ENCODE measurements at regions of chr5 and their contacts with region 1.

Region 1: DNA sequence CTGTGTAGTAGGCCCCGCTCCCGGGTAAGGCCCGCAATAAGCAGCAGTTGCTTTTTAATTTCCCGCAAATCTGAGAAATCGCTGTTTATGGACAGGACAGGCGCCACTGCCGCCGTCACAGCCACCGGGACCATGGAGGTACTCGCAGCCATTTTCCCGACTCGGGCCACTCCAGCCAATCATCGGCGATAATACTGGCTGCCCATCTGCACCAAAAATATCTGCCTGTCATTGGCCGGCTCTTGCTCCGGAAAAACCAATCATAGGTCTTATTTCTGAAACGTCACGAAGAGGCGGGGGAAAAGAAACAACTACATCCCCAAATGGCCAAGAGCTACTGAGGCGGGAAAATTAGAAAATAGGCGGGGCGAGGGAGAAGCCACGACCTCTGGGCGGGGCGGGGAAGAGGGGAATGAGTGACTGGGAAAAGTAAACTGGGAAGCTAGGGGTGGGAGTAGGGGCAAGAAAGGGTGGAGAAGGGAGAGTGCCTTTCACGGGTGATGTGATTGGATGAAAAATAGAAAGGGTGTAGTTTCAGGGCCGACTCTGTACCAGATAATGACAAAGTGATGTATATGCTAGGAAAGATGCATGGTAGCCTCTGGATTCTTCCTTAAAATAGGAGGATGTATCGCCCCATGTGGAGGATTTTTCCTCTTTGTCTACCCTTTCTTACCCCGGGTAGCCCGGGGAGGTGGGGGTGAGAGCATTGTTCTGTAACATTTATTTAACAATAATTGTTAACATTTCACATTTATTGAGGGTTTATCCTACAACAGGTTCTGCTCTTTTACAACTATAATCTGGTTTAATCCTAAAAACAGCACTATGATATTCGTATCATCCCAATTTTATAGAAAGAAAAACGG is at the start of gene CDC23:
- DNase-seq: peak; percentile 78 to 98 (median 83)
- ATAC-seq: peak; percentile 98
- H3K4me3 ChIP-seq: peak within 1 kb of the TSS; percentile 90
- H3K4me3 Mint-ChIP-seq: peak within 1 kb of the TSS; percentile 95
- H3K27ac ChIP-seq: peak within 1 kb of the TSS; percentile 70 to 71
- H3K27ac Mint-ChIP-seq: peak within 1 kb of the TSS; percentile 91
- H3K4me1 ChIP-seq: peaks cover 23% of the 10 kb centered on the region
- H3K4me1 Mint-ChIP-seq: peaks cover 26% of the 10 kb centered on the region
- H3K27me3 ChIP-seq: peaks cover 0 to 2% of the 10 kb centered on the region in 2 experiments
- H3K27me3 Mint-ChIP-seq: peaks cover 4% of the 10 kb centered on the region
- CTCF ChIP-seq: no peak
- total RNA-seq, gene CDC23: 14.2 to 15.6 TPM

Region 2: GRCh38 chr5:138178516-138179276 is 34.7 kb before region 1 on chr5 and contains the starts of genes BRD8 and KIF20A:
- CTCF ChIA-PET with region 1: no interaction called
- POLR2A ChIA-PET with region 1: interaction called, 13 read pairs
- intact Hi-C with region 1: loop called (anchors 1 to 2 kb)
- DNase-seq: peak; percentile 77 to 94 (median 85)
- ATAC-seq: peak; percentile 86
- H3K4me3 ChIP-seq: peak within 1 kb of the TSS; percentile 94
- H3K4me3 Mint-ChIP-seq: no peak within 1 kb of the TSS
- H3K27ac ChIP-seq: peak within 1 kb of the TSS; percentile 55 to 76
- H3K27ac Mint-ChIP-seq: no peak within 1 kb of the TSS
- H3K4me1 ChIP-seq: peaks cover 27% of the 10 kb centered on the region
- H3K4me1 Mint-ChIP-seq: peaks cover 11% of the 10 kb centered on the region
- H3K27me3 ChIP-seq: no peaks in the 10 kb centered on the region
- H3K27me3 Mint-ChIP-seq: no peaks in the 10 kb centered on the region
- CTCF ChIP-seq: no peak
- total RNA-seq, gene BRD8: 6.9 to 9.6 TPM
- total RNA-seq, gene KIF20A: not detected

Region 3: DNA sequence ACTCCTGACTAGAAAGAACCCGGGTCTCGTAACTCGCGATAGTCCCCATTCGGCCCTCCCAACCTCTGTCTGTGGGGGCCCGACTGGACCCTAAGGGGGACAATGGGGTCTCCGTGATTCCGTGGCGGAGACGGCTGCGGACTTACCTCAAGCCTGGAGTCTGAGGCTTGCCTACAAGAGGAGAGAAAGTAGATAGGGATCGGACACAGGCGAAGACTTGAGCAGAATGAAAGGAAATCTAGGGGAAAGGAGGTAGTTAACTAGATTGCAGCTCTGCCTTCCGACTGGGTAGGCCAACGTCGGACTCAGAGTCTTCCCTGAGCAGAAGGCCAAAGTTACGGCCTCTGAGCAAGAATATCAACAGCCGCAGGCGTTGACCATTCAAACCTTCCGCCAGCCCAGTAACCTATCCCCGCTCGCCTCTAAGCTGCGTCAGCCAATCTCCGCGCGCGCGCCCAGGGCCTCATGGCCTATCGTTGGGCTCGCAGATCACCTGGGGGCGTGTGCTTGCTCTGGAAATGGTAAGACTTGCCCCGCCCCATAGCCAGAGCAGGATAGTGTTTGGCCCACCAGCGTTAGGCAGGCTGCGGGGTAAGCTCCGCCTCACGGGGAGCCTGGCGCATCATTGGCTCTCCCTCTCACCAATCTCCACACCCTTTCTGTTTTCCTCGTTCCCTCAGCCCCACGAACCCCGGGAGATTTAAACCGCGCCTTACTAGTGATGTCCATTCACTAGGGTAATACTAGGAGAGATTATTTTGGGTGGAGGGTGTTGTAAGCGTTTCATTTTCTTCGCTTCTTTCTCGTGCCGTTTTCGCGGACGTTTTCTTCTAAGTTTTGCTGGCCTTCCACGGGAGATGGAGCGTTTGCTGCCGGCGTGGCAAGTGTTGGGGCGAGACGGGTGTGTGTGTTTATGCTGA is 118.3 kb after region 1 on chr5 and contains the start of gene CDC25C:
- CTCF ChIA-PET with region 1: no interaction called
- POLR2A ChIA-PET with region 1: interaction called, 11 read pairs
- intact Hi-C with region 1: loop called (anchors 5 kb)
- DNase-seq: peak; percentile 92 to 99 (median 95)
- ATAC-seq: peak; percentile 99
- H3K4me3 ChIP-seq: peak within 1 kb of the TSS; percentile 68
- H3K4me3 Mint-ChIP-seq: peak within 1 kb of the TSS; percentile 83
- H3K27ac ChIP-seq: no peak within 1 kb of the TSS
- H3K27ac Mint-ChIP-seq: peak within 1 kb of the TSS; percentile 40
- H3K4me1 ChIP-seq: peaks cover 13% of the 10 kb centered on the region
- H3K4me1 Mint-ChIP-seq: peaks cover 8% of the 10 kb centered on the region
- H3K27me3 ChIP-seq: no peaks in the 10 kb centered on the region
- H3K27me3 Mint-ChIP-seq: no peaks in the 10 kb centered on the region
- CTCF ChIP-seq: no peak
- total RNA-seq, gene CDC25C: not detected

Region 4: DNA sequence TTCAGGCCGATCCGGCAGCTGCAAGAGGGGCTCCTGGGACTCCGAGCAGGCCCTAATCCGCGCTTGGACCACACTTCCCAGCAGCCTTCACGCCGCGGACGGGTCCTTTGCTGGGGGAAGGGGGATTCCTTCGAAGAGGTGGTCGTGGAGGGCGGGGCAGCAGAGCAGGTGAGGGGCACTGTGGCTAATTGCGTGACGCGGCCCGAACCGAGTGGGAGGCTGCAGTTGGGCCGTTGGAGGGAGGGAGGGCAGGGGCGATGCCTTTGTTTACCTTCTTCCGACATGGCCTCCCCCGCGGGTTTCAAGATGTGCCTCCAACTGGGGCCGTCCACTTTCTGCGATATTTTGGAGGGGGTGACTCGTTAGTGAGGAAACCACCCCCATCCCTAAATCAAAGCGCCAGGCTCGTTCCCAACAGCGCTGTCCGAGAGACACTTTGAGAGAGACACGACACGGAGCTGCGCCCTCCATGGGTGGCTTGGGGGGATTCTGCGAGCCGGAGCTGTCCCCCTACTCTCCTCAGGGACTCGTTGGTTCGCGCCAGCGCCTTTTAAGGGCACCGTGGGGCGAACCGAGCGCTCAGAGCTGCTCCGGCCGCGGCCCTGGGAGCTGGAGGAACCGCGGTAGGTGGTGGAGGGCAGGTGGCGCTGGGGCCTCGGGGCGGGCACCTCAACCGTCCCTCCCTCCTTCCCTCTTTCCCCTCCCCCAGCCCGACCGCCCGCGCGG is 124.5 kb after region 1 on chr5 and contains the start of gene FAM53C:
- CTCF ChIA-PET with region 1: no interaction called
- POLR2A ChIA-PET with region 1: interaction called, 11 read pairs
- intact Hi-C with region 1: loop called (anchors 5 kb)
- DNase-seq: peak; percentile 82 to 96 (median 92)
- ATAC-seq: peak; percentile 81
- H3K4me3 ChIP-seq: peak within 1 kb of the TSS; percentile 62
- H3K4me3 Mint-ChIP-seq: peak within 1 kb of the TSS; percentile 94
- H3K27ac ChIP-seq: peak within 1 kb of the TSS; percentile 93 to 95
- H3K27ac Mint-ChIP-seq: peak within 1 kb of the TSS; percentile 96
- H3K4me1 ChIP-seq: peaks cover 21% of the 10 kb centered on the region
- H3K4me1 Mint-ChIP-seq: peaks cover 46% of the 10 kb centered on the region
- H3K27me3 ChIP-seq: no peaks in the 10 kb centered on the region
- H3K27me3 Mint-ChIP-seq: no peaks in the 10 kb centered on the region
- CTCF ChIP-seq: no peak
- total RNA-seq, gene FAM53C: 81.0 to 83.8 TPM

Measured in CD4-positive, alpha-beta T cell (primary cell).